PC-9 (cell line): ENCODE measurements at regions of chr5 and their contacts with region 1.

Region 1: GRCh38 chr5:82641331-82642003 is 363.3 kb upstream of the RPS23 start:
- DNase-seq: peak; percentile 50 to 52
- H3K4me3 ChIP-seq: no peak overlapping the region
- H3K27ac ChIP-seq: no peak overlapping the region
- H3K4me1 ChIP-seq: no peaks in the 10 kb centered on the region
- H3K27me3 ChIP-seq: no peaks in the 10 kb centered on the region
- CTCF ChIP-seq: peak; percentile 68

Region 2: DNA sequence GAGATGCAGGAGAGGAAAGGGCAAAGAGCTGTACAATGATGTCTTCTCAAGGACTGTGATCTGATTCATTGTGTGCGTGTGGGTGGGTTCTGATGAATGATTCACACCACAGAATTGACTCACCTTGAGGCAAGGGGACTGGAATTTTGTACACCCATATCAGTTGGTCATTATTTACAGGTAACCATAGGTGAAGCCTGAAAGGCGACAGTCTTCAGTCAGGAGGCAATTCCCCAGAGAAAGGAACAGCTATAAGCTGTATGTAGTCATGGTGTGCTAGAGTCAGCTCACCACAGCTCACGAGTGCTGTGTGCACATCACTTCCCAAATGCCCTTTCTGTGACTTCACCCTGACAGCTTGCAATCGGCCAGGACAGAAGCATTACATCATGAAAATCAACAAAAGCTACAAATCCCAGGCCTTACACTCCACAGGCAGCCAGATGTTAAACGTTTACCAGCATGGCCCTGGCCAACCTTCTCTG is 275.7 kb before region 1 on chr5:
- CTCF ChIA-PET with region 1: no interaction called
- POLR2A ChIA-PET with region 1: no interaction called
- intact Hi-C with region 1: no loop called
- DNase-seq: peak; percentile 10 to 90
- H3K4me3 ChIP-seq: no peak overlapping the region
- H3K27ac ChIP-seq: peak overlapping the region; percentile 78
- H3K4me1 ChIP-seq: peaks cover 8% of the 10 kb centered on the region
- H3K27me3 ChIP-seq: no peaks in the 10 kb centered on the region
- CTCF ChIP-seq: no peak

Region 3: GRCh38 chr5:82793808-82794419 is 152.4 kb after region 1 on chr5:
- CTCF ChIA-PET with region 1: no interaction called
- POLR2A ChIA-PET with region 1: no interaction called
- intact Hi-C with region 1: loop called (anchors 10 kb)
- DNase-seq: peak in 1 of 2 experiments; percentile 3
- H3K4me3 ChIP-seq: no peak overlapping the region
- H3K27ac ChIP-seq: no peak overlapping the region
- H3K4me1 ChIP-seq: no peaks in the 10 kb centered on the region
- H3K27me3 ChIP-seq: no peaks in the 10 kb centered on the region
- CTCF ChIP-seq: peak; percentile 78

Region 4: DNA sequence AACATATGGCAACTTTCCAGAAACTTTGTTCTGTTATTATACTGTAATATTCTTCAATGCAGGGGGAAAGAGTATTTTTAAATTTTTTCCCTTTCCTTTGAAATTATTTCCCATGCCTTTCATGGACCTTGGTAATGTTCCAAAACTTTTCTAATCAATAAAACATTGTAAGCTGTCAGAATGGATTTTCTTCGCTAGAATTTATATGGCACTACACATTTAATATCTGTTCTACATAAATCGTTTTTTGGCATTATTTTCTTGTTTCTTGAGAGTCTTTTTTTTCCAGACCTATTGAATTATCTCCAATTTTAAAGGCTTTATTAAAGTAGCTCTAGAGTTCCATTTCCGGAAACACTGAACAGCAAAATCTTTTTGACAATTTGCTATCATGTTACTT is 186.7 kb after region 1 on chr5:
- CTCF ChIA-PET with region 1: no interaction called
- POLR2A ChIA-PET with region 1: no interaction called
- intact Hi-C with region 1: no loop called
- DNase-seq: no peak
- H3K4me3 ChIP-seq: no peak overlapping the region
- H3K27ac ChIP-seq: no peak overlapping the region
- H3K4me1 ChIP-seq: no peaks in the 10 kb centered on the region
- H3K27me3 ChIP-seq: no peaks in the 10 kb centered on the region
- CTCF ChIP-seq: no peak

Region 5: DNA sequence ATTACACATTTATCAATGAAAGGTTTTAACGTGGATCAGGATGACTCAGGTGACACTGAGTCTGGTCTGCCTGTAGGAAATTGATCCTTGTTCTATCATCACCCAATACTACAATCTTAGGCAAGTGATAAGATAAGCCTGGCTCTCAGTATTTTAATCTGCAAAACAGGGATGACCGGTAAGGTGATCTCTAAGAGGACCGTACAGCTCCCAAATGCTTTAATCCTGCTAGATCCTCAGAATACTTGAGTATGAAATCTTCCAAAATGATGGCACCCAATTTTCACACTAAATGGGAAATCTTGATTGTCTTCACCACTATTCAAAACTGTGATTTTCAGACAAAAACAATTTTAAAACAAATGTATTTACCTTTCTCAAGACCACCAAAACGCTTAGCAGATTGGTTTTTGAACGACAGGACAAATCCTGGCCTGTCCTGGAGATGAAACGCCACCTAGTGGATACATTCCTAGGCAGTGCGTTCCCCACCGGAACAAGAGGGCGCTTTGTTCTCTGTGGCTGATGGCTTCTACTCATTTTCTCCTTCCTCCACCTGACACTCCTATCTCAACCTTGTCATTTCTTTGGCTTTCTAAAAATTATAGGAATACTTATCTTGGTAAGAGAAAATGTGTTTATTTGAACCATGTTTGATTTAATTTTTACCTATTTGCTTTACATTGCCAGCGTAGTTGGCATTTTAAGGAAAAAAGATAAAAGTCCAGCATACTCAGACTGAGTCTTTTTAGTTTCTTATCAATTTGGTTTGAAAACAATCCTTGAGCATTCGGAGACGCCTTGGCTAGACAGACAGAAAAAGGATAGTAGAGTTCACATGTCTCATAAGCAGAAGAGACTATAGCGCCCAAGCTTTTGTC is 788.9 kb after region 1 on chr5:
- CTCF ChIA-PET with region 1: no interaction called
- POLR2A ChIA-PET with region 1: no interaction called
- intact Hi-C with region 1: loop called (anchors 5 kb)
- DNase-seq: peak in 1 of 2 experiments; percentile 30
- H3K4me3 ChIP-seq: no peak overlapping the region
- H3K27ac ChIP-seq: no peak overlapping the region
- H3K4me1 ChIP-seq: no peaks in the 10 kb centered on the region
- H3K27me3 ChIP-seq: no peaks in the 10 kb centered on the region
- CTCF ChIP-seq: peak; percentile 82

Region 6: GRCh38 chr5:83473346-83474163 is 832.1 kb after region 1 on chr5:
- CTCF ChIA-PET with region 1: no interaction called
- POLR2A ChIA-PET with region 1: no interaction called
- intact Hi-C with region 1: loop called (anchors 2 kb)
- DNase-seq: peak; percentile 40 to 75
- H3K4me3 ChIP-seq: peak overlapping the region; percentile 63
- H3K27ac ChIP-seq: no peak overlapping the region
- H3K4me1 ChIP-seq: peaks cover 7% of the 10 kb centered on the region
- H3K27me3 ChIP-seq: peaks cover 14% of the 10 kb centered on the region; the same call in 1 of the 2 replicates
- CTCF ChIP-seq: peak; percentile 81